ENCODE measurements at regions of chr2 and their contacts with region 1.

Region 1: DNA sequence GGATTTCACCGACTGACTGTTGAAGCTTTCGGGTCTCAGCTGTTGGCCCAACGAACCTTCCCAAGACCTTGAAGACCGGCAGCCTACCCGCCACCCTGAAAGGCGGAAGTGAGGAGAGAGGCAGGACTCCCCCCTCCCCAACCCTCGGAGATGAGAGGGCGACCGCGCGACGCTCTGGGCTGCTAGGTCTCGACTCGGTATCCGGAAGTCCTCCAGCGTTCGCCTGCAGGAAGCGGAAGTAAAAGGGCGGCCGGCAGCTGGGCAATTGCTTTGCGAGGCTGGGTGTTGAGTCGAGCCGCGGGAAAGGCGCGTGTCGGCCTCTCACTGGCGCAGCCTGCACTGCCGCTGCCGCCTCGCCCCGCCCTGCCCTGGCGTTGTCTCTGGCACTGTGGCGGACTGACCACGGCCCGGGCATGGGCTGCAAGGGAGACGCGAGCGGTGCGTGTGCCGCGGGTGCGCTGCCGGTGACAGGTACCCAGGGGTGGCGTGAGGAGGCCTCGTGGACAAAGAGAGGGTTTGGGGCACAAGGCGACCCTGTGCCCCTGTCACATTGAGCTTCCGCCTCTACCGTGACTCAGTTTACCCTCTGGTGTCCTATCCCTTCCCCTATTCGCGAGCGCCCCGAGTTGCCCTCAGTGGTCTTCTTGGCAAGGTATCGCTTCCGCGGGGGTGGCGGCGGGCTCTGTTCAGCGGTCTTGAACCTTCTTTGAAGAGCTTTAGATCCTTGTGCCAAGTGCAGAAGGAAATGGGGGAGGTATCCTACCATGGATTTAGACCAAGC is at the start of gene UGGT1:
- H3K4me3 Mint-ChIP-seq: peak within 1 kb of the TSS; percentile 97
- H3K27ac Mint-ChIP-seq: peak within 1 kb of the TSS; percentile 96
- H3K4me1 Mint-ChIP-seq: peaks cover 33% of the 10 kb centered on the region
- H3K27me3 Mint-ChIP-seq: no peaks in the 10 kb centered on the region

Region 2: DNA sequence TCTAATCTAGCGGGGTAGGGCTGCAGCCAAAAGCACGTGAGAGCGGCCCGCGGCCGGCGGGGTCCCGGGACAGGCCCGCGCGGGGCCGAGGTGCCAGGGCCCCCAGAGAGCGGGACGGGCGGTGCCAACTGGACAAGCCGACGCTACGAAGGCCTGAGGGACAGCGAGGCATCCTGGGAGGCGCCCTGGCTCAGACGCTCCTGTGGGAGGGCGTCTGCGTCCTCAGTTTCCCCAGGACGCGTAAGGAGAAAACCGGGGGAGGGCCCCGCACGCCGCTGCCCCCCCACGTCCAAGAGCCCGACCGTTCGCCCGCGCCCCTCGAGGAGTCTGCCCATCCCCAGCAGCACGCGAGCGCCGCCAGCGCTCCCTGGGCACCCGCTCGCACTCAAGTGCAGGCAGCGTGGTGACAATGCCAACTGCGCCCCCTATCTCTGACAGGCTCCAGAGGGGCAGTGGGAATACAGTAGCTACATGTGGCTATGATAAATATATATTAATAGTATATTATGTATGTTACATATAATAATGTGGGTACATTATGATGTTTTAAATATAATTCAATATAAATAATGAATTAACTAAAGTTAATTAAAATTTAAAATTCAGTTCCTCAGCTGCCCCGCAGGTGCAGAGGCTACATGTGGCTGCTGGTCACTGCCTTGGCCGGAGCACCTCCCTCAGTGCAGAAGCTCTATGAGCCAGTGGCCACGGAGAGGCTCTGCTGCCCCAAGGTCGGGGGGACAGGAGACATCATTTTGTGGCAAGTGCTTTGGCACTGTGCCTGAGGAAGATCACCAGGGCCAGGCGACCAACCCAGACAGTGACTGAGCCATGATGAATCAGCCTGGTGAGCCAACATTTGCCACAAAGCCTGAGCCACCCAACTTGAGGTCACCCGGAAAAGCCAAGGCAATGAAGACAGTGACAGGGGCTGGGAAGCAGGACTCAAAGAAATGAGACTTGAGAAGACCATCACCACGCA is 395.4 kb before region 1 on chr2:
- intact Hi-C with region 1: no loop called
- H3K4me3 Mint-ChIP-seq: peak overlapping the region; percentile 50
- H3K27ac Mint-ChIP-seq: no peak overlapping the region
- H3K4me1 Mint-ChIP-seq: peaks cover 31% of the 10 kb centered on the region
- H3K27me3 Mint-ChIP-seq: peaks cover 2% of the 10 kb centered on the region

Region 3: GRCh38 chr2:127874378-127875271 is 216.5 kb before region 1 on chr2:
- intact Hi-C with region 1: loop called (anchors 10 kb)
- H3K4me3 Mint-ChIP-seq: peak overlapping the region; percentile 11
- H3K27ac Mint-ChIP-seq: peak overlapping the region; percentile 30
- H3K4me1 Mint-ChIP-seq: peaks cover 32% of the 10 kb centered on the region
- H3K27me3 Mint-ChIP-seq: no peaks in the 10 kb centered on the region

Region 4: DNA sequence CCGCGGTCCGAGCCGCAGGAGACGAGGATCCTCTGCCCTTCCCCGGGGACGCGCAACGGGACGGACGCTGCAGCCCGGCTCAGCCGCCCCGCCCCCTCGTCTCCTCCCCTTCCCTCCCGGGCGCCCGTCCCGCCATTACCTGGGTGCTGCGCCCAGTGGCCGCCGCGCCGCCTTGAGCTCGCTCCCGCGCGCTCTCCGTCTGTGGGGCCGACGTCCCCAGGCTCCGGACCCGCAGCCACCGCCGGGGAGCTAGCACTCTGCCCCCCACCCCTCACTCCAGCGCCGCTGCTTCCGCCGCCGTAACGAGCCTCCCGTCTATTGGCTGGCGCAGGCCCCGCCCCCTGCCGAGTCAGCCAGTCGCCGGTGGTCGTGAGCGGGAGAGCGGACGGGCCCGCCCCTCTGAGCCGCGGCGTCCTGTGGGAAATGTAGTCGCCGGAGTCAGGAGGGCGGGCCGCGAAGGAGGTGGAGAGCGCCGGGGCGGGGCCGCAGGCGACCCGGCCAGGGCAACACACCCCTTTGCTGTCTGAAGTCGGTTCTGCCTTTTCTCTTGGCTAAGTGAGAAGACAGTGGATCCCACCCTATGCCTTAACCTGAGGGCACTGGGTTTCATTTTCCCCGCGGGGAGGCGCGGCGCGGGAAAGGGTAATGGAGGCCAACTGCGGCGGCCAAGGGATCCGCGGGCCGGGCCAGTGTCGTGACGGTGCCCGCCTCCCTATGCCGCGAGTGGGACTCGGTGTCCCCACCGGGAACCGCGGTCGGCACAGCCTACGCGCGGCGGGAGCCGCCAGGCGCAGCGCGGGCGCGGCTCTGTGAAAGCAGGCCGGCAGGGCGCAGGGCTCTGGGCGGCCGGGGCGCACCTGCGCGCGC is 63.1 kb before region 1 on chr2 and contains the start of gene SAP130:
- intact Hi-C with region 1: loop called (anchors 1 kb)
- H3K4me3 Mint-ChIP-seq: peak within 1 kb of the TSS; percentile 95
- H3K27ac Mint-ChIP-seq: peak within 1 kb of the TSS; percentile 97
- H3K4me1 Mint-ChIP-seq: peaks cover 18% of the 10 kb centered on the region
- H3K27me3 Mint-ChIP-seq: peaks cover 1% of the 10 kb centered on the region

Measured in dendritic cell treated with granulocyte-macrophage colony-stimulating factor and Interleukin-4, amounts not matched to agents 40 ng/mL and 50 ng/mL, for 4 days (primary cell).